ENCODE measurements at regions of chr11 and their contacts with region 1.

Region 1: GRCh38 chr11:78188286-78189173 is at the starts of genes KCTD21 and USP35:
- DNase-seq: peak; percentile 93
- H3K4me3 Mint-ChIP-seq: peak within 1 kb of the TSS; percentile 99
- H3K27ac Mint-ChIP-seq: peak within 1 kb of the TSS; percentile 99
- H3K4me1 Mint-ChIP-seq: peaks cover 55% of the 10 kb centered on the region
- H3K27me3 Mint-ChIP-seq: no peaks in the 10 kb centered on the region
- total RNA-seq, gene KCTD21: 8.6 to 10.1 TPM
- total RNA-seq, gene USP35: 13.4 to 14.2 TPM

Region 2: DNA sequence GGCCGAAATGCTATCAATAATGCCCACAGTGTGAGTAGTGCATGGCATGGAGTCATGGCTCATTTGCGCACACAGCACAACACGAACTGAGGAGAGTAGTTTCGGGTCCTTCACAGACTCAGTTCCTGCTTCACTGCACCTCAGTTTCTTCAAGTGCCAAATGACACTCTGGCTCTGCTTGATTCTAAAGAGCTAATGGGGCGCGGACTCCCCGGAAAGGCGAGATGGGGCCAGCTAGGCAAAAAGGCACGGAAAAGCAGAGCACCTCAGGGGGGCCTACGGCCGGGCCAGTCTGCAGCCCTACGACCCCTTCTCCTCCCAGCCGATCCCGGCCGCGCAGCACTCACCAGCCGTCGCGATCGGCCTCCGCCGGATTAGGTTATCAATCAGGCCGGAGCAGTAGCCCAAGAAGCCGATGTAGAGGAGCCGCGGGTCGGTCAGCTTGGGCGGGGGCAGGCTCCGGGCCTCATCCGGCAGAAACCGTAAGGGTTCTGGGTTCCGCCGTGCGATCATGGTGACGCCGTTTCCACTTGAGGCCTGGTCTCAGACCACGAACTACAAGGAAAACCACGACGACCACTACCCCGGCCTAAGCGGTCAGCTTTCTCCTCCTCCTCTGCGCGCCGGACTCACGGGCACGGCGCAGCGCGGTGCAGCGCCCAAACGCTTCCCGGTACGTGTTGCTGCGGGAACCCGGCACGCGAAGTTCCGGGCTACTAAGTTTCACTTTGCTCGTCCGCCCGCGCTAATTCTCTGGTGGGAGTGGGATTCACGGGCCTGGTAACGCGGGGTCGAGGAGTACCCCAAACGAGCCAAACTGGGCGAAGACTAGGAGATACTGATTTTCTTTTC is 109.1 kb before region 1 on chr11 and contains the start of gene NDUFC2:
- CTCF ChIA-PET with region 1: no interaction called
- intact Hi-C with region 1: loop called (anchors 1 kb)
- DNase-seq: peak; percentile 75
- H3K4me3 Mint-ChIP-seq: peak within 1 kb of the TSS; percentile 92
- H3K27ac Mint-ChIP-seq: peak within 1 kb of the TSS; percentile 86
- H3K4me1 Mint-ChIP-seq: peaks cover 45% of the 10 kb centered on the region
- H3K27me3 Mint-ChIP-seq: no peaks in the 10 kb centered on the region
- total RNA-seq, gene NDUFC2: 180 to 183 TPM

Region 3: GRCh38 chr11:78139422-78140391 is 48.8 kb before region 1 on chr11 and contains the start of gene ALG8:
- CTCF ChIA-PET with region 1: interaction called, 4 read pairs
- intact Hi-C with region 1: loop called (anchors 1 kb)
- DNase-seq: peak; percentile 97
- H3K4me3 Mint-ChIP-seq: peak within 1 kb of the TSS; percentile 85
- H3K27ac Mint-ChIP-seq: peak within 1 kb of the TSS; percentile 90
- H3K4me1 Mint-ChIP-seq: peaks cover 33% of the 10 kb centered on the region
- H3K27me3 Mint-ChIP-seq: no peaks in the 10 kb centered on the region
- total RNA-seq, gene ALG8: 35.1 to 35.9 TPM

Region 4: GRCh38 chr11:78177216-78177615 is 11.3 kb before region 1 on chr11:
- CTCF ChIA-PET with region 1: no interaction called
- intact Hi-C with region 1: no loop called
- DNase-seq: no peak
- H3K4me3 Mint-ChIP-seq: no peak overlapping the region
- H3K27ac Mint-ChIP-seq: no peak overlapping the region
- H3K4me1 Mint-ChIP-seq: peaks cover 7% of the 10 kb centered on the region
- H3K27me3 Mint-ChIP-seq: no peaks in the 10 kb centered on the region

Region 5: GRCh38 chr11:78219493-78220217 is 31.1 kb after region 1 on chr11:
- CTCF ChIA-PET with region 1: no interaction called
- intact Hi-C with region 1: loop called (anchors 1 kb)
- DNase-seq: peak; percentile 50
- H3K4me3 Mint-ChIP-seq: no peak overlapping the region
- H3K27ac Mint-ChIP-seq: no peak overlapping the region
- H3K4me1 Mint-ChIP-seq: peaks cover 14% of the 10 kb centered on the region
- H3K27me3 Mint-ChIP-seq: no peaks in the 10 kb centered on the region

Region 6: GRCh38 chr11:78290293-78291176 is 102.0 kb after region 1 on chr11:
- CTCF ChIA-PET with region 1: no interaction called
- intact Hi-C with region 1: loop called (anchors 5 kb)
- DNase-seq: peak; percentile 45
- H3K4me3 Mint-ChIP-seq: no peak overlapping the region
- H3K27ac Mint-ChIP-seq: peak overlapping the region; percentile 63
- H3K4me1 Mint-ChIP-seq: peaks cover 27% of the 10 kb centered on the region
- H3K27me3 Mint-ChIP-seq: no peaks in the 10 kb centered on the region

Region 7: GRCh38 chr11:78310500-78310909 is 122.0 kb after region 1 on chr11:
- CTCF ChIA-PET with region 1: no interaction called
- intact Hi-C with region 1: no loop called
- DNase-seq: no peak
- H3K4me3 Mint-ChIP-seq: no peak overlapping the region
- H3K27ac Mint-ChIP-seq: no peak overlapping the region
- H3K4me1 Mint-ChIP-seq: peaks cover 5% of the 10 kb centered on the region
- H3K27me3 Mint-ChIP-seq: no peaks in the 10 kb centered on the region

Region 8: GRCh38 chr11:78564490-78565467 is 376.2 kb after region 1 on chr11:
- CTCF ChIA-PET with region 1: no interaction called
- intact Hi-C with region 1: loop called (anchors 5 kb)
- DNase-seq: peak; percentile 54
- H3K4me3 Mint-ChIP-seq: no peak overlapping the region
- H3K27ac Mint-ChIP-seq: no peak overlapping the region
- H3K4me1 Mint-ChIP-seq: peaks cover 27% of the 10 kb centered on the region
- H3K27me3 Mint-ChIP-seq: no peaks in the 10 kb centered on the region